ENCODE measurements at regions of chr3 and their contacts with region 1.

Region 1: GRCh38 chr3:39126532-39127071 is 19.1 kb downstream of the TTC21A start:
- DNase-seq: no peak
- H3K4me3 ChIP-seq: no peak overlapping the region
- H3K27ac ChIP-seq: peak overlapping the region; percentile 79 to 88
- H3K4me1 ChIP-seq: peaks cover 20% of the 10 kb centered on the region
- H3K27me3 ChIP-seq: no peaks in the 10 kb centered on the region
- CTCF ChIP-seq: peak in 3 of 4 experiments; percentile 54 to 72 (median 66)
- POLR2A ChIP-seq: no peak

Region 2: GRCh38 chr3:38763569-38763968 is 363.0 kb before region 1 on chr3:
- intact Hi-C with region 1: no loop called
- DNase-seq: no peak
- H3K4me3 ChIP-seq: no peak overlapping the region
- H3K27ac ChIP-seq: no peak overlapping the region
- H3K4me1 ChIP-seq: no peaks in the 10 kb centered on the region
- H3K27me3 ChIP-seq: no peaks in the 10 kb centered on the region
- CTCF ChIP-seq: no peak
- POLR2A ChIP-seq: no peak

Region 3: GRCh38 chr3:38907426-38907825 is 219.2 kb before region 1 on chr3:
- intact Hi-C with region 1: no loop called
- DNase-seq: no peak
- H3K4me3 ChIP-seq: no peak overlapping the region
- H3K27ac ChIP-seq: no peak overlapping the region
- H3K4me1 ChIP-seq: no peaks in the 10 kb centered on the region
- H3K27me3 ChIP-seq: no peaks in the 10 kb centered on the region
- CTCF ChIP-seq: no peak
- POLR2A ChIP-seq: no peak

Region 4: DNA sequence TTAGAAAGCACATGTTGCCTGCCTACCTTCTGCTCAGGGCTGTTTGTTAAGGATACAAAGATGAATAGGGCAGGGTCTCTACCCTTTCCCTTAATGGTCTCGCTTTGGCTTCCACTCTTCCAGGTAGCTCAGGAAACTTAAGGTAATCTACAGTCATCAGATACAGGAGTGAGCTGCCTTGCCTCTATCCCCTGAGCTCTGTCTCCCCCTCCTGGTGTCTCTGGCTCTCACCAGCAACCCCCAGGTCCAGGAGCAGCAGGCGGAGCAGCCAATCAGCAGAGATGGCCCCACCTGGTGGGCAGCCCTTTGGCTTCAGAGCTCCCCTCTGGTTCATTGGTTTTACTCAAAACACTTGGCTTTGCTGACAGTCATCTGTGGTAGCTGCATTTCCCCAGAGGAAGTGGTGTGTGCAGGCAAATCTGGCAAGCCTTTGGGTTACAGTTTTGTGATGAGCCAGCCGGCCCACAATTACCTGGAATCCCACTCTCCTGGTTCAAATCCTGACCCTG is 161.8 kb after region 1 on chr3:
- intact Hi-C with region 1: loop called (anchors 1 kb)
- DNase-seq: peak; percentile 79
- H3K4me3 ChIP-seq: no peak overlapping the region
- H3K27ac ChIP-seq: no peak overlapping the region
- H3K4me1 ChIP-seq: no peaks in the 10 kb centered on the region
- H3K27me3 ChIP-seq: no peaks in the 10 kb centered on the region
- CTCF ChIP-seq: peak; percentile 56 to 95 (median 90)
- POLR2A ChIP-seq: no peak

Region 5: GRCh38 chr3:39383045-39383880 is 256.7 kb after region 1 on chr3 and contains the start of gene SLC25A38:
- intact Hi-C with region 1: loop called (anchors 10 kb)
- DNase-seq: peak; percentile 75
- H3K4me3 ChIP-seq: peak within 1 kb of the TSS; percentile 58 to 69
- H3K27ac ChIP-seq: peak within 1 kb of the TSS; percentile 91 to 95
- H3K4me1 ChIP-seq: no peaks in the 10 kb centered on the region
- H3K27me3 ChIP-seq: no peaks in the 10 kb centered on the region
- CTCF ChIP-seq: peak in 2 of 4 experiments; percentile 37 to 51
- POLR2A ChIP-seq: peak; percentile 49
- total RNA-seq, gene SLC25A38: 36.7 to 72.4 TPM

Region 6: GRCh38 chr3:39809181-39809994 is 682.8 kb after region 1 on chr3 and contains the start of gene MYRIP:
- intact Hi-C with region 1: no loop called
- DNase-seq: peak; percentile 77
- H3K4me3 ChIP-seq: peak within 1 kb of the TSS; percentile 47 to 51
- H3K27ac ChIP-seq: peak within 1 kb of the TSS in 1 of 2 donors; percentile 42
- H3K4me1 ChIP-seq: peaks cover 4% of the 10 kb centered on the region
- H3K27me3 ChIP-seq: no peaks in the 10 kb centered on the region
- CTCF ChIP-seq: peak in 3 of 4 experiments; percentile 15 to 34 (median 19)
- POLR2A ChIP-seq: no peak
- total RNA-seq, gene MYRIP: 4.8 to 9.3 TPM